A549 (cell line): ENCODE measurements at regions of chr5 and their contacts with region 1.

Region 1: GRCh38 chr5:80093796-80094195 is 58.6 kb downstream of the THBS4 start:
- DNase-seq: peak in 1 of 2 experiments; percentile 6
- ATAC-seq: peak in 1 of 2 experiments; percentile 38; a peak in 3 of 6 replicates
- H3K4me3 ChIP-seq: no peak overlapping the region
- H3K27ac ChIP-seq: no peak overlapping the region
- H3K4me1 ChIP-seq: no peaks in the 10 kb centered on the region
- CTCF ChIP-seq: no peak
- EP300 ChIP-seq: no peak
- POLR2A ChIP-seq: no peak
- RAD21 ChIP-seq: no peak

Region 2: DNA sequence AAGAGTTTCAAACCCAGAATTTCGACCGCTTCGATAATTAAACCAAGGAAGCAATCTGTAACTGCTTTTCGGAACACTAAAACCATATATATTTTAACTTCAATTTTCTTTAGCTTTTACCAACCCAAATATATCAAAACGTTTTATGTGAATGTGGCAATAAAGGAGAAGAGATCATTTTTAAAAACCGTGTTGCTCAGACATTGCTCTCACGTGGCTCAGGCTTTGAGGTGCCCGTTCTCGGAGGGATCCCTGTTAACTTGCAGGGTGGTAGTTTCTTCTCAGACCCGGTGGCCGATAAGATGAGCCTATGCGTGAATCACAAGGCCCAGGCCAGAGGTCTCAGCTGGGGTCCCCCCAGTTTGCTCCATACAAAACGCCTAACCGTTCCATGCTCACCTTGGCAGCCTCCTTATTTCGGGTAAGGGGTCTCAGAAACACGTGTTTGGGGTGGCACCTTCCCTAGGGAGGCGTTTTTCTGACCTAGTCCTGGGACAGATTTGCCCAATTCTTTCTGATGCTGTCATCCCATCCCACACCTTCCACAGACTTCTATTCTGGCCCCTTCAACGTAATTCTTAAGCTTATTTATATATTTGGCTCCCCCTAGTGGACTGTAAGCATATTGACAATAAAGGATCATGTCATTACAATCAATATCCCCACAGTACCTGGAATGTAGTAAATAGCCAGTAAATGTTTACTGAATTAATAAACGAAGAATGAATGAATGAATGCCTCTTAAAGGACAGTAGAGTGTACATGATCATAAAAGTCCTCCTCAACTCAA is 10.5 kb before region 1 on chr5:
- CTCF ChIA-PET with region 1: interaction called, 43 read pairs
- POLR2A ChIA-PET with region 1: interaction called, 3 read pairs
- DNase-seq: peak; percentile 74 to 82
- ATAC-seq: peak; percentile 84 to 91
- H3K4me3 ChIP-seq: peak overlapping the region; percentile 38
- H3K27ac ChIP-seq: peak overlapping the region; percentile 11 to 65; a peak in 4 of 6 replicates
- H3K4me1 ChIP-seq: no peaks in the 10 kb centered on the region
- CTCF ChIP-seq: peak; percentile 73
- EP300 ChIP-seq: no peak
- POLR2A ChIP-seq: no peak
- RAD21 ChIP-seq: peak; percentile 67 to 72

Region 3: DNA sequence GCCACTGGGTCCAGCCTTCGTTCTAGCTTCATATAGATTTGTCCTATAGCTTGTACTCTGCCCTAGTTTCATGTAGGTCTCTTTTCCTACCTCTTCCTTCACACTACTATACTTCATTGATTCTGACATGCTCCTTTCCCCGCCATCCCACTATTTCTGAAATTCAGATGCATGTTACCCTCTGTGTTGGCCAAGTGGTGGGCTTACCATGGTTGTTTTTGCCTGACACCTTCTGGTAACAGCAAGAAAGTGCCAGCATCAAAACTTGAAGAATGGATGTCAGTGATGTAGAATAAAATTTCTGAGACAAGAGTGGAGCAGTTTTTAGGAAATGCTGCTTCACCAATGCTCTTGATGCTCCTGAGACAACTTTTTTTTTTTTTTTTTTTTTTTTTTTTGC is 181.6 kb after region 1 on chr5:
- CTCF ChIA-PET with region 1: interaction called, 23 read pairs
- POLR2A ChIA-PET with region 1: interaction called, 3 read pairs
- DNase-seq: peak in 1 of 2 experiments; percentile 41
- ATAC-seq: peak; percentile 64 to 76; a peak in 5 of 6 replicates
- H3K4me3 ChIP-seq: no peak overlapping the region
- H3K27ac ChIP-seq: no peak overlapping the region
- H3K4me1 ChIP-seq: no peaks in the 10 kb centered on the region
- CTCF ChIP-seq: peak; percentile 47
- EP300 ChIP-seq: no peak
- POLR2A ChIP-seq: no peak
- RAD21 ChIP-seq: peak; percentile 70 to 78

Region 4: DNA sequence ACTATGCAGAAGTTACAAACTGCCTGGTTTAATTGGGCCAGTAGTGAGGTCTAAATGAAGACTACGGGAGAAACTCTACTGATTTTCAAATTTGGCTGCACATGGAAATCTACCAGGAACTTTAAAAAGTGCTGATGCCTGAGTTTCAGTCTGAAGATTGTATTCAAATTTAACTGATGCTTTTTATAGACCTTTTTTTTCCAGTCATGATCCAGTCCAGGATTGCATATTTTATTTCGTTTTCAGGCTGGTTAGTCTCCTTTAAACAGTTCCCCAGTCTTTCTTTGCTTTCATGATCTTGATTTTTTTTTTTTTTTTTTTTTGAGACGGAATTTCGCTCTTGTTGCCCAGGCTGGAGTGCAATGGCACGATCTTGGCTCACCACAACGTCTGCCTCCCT is 202.3 kb after region 1 on chr5:
- CTCF ChIA-PET with region 1: interaction called, 16 read pairs
- POLR2A ChIA-PET with region 1: no interaction called
- DNase-seq: no peak
- ATAC-seq: no peak
- H3K4me3 ChIP-seq: no peak overlapping the region
- H3K27ac ChIP-seq: no peak overlapping the region
- H3K4me1 ChIP-seq: no peaks in the 10 kb centered on the region
- CTCF ChIP-seq: no peak
- EP300 ChIP-seq: no peak
- POLR2A ChIP-seq: no peak
- RAD21 ChIP-seq: no peak

Region 5: GRCh38 chr5:80672140-80672736 is 578.4 kb after region 1 on chr5:
- CTCF ChIA-PET with region 1: interaction called, 12 read pairs
- POLR2A ChIA-PET with region 1: no interaction called
- DNase-seq: peak; percentile 72 to 79
- ATAC-seq: peak; percentile 85 to 95; a peak in 5 of 6 replicates
- H3K4me3 ChIP-seq: no peak overlapping the region
- H3K27ac ChIP-seq: no peak overlapping the region
- H3K4me1 ChIP-seq: 0 out of 3 replicates have a peak, but pooled peaks cover 3% of the 10 kb centered on the region
- CTCF ChIP-seq: peak; percentile 84
- EP300 ChIP-seq: no peak
- POLR2A ChIP-seq: no peak
- RAD21 ChIP-seq: peak; percentile 64 to 67